ENCODE measurements at regions of chr6 and their contacts with region 1.

Region 1: GRCh38 chr6:157656437-157656997 is 166.5 kb upstream of the SNX9 start:
- DNase-seq: no peak
- H3K4me3 ChIP-seq: no peak overlapping the region
- H3K4me3 Mint-ChIP-seq: no peak overlapping the region
- H3K27ac ChIP-seq: no peak overlapping the region
- H3K27ac Mint-ChIP-seq: no peak overlapping the region
- H3K4me1 ChIP-seq: no peaks in the 10 kb centered on the region
- H3K4me1 Mint-ChIP-seq: no peaks in the 10 kb centered on the region
- H3K27me3 ChIP-seq: no peaks in the 10 kb centered on the region
- H3K27me3 Mint-ChIP-seq: no peaks in the 10 kb centered on the region

Region 2: GRCh38 chr6:157667211-157668008 is 10.9 kb after region 1 on chr6:
- CTCF ChIA-PET with region 1: interaction called, 31 read pairs
- POLR2A ChIA-PET with region 1: no interaction called
- intact Hi-C with region 1: no loop called
- DNase-seq: peak in 4 of 5 donors; percentile 45 to 61 (median 51)
- H3K4me3 ChIP-seq: no peak overlapping the region
- H3K4me3 Mint-ChIP-seq: peak overlapping the region in 1 of 8 donors; percentile 16
- H3K27ac ChIP-seq: no peak overlapping the region
- H3K27ac Mint-ChIP-seq: peak overlapping the region in 3 of 7 donors; percentile 5 to 75 (median 53)
- H3K4me1 ChIP-seq: no peaks in the 10 kb centered on the region
- H3K4me1 Mint-ChIP-seq: peaks cover 3 to 5% (median 5%) of the 10 kb centered on the region in 4 donors
- H3K27me3 ChIP-seq: no peaks in the 10 kb centered on the region
- H3K27me3 Mint-ChIP-seq: peaks cover 2 to 4% of the 10 kb centered on the region in 2 donors

Region 3: GRCh38 chr6:158095671-158096070 is 439.2 kb after region 1 on chr6:
- CTCF ChIA-PET with region 1: no interaction called
- POLR2A ChIA-PET with region 1: no interaction called
- intact Hi-C with region 1: no loop called
- DNase-seq: no peak
- H3K4me3 ChIP-seq: no peak overlapping the region
- H3K4me3 Mint-ChIP-seq: no peak overlapping the region
- H3K27ac ChIP-seq: no peak overlapping the region
- H3K27ac Mint-ChIP-seq: no peak overlapping the region
- H3K4me1 ChIP-seq: no peaks in the 10 kb centered on the region
- H3K4me1 Mint-ChIP-seq: no peaks in the 10 kb centered on the region
- H3K27me3 ChIP-seq: no peaks in the 10 kb centered on the region
- H3K27me3 Mint-ChIP-seq: no peaks in the 10 kb centered on the region